B cell (primary cell): ENCODE measurements at regions of chr10 and their contacts with region 1.

Region 1: GRCh38 chr10:22010973-22011408 is 7.5 kb upstream of the DNAJC1 start:
- DNase-seq: peak; percentile 39
- ATAC-seq: no peak
- H3K4me3 ChIP-seq: no peak overlapping the region
- H3K4me3 Mint-ChIP-seq: no peak overlapping the region
- H3K27ac ChIP-seq: no peak overlapping the region
- H3K27ac Mint-ChIP-seq: no peak overlapping the region
- H3K4me1 ChIP-seq: peaks cover 0 to 3% of the 10 kb centered on the region in 2 donors
- H3K4me1 Mint-ChIP-seq: peaks cover 5% of the 10 kb centered on the region
- H3K27me3 ChIP-seq: no peaks in the 10 kb centered on the region
- H3K27me3 Mint-ChIP-seq: no peaks in the 10 kb centered on the region
- CTCF ChIP-seq: peak; percentile 83

Region 2: DNA sequence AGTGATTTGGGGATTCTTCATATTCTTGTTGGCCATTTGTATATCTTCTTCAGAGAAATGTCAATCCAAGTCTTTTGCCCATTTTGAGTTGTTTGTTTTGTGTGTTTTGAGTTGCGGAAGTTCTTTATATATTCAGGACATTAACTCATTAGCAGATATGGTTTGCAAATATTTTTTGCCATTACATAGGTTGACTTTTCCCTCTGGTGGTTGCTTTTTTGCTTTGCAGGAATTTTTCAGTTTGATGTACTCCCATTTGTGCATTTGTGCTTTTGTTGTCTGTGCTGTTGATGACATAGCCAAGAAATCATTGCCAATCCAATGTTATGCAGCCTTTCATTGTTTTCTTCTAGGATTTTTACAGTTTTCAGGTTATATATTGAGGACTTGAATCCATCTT is 56.1 kb after region 1 on chr10:
- CTCF ChIA-PET with region 1: no interaction called
- POLR2A ChIA-PET with region 1: no interaction called
- intact Hi-C with region 1: no loop called
- DNase-seq: no peak
- ATAC-seq: no peak
- H3K4me3 ChIP-seq: no peak overlapping the region
- H3K4me3 Mint-ChIP-seq: no peak overlapping the region
- H3K27ac ChIP-seq: no peak overlapping the region
- H3K27ac Mint-ChIP-seq: no peak overlapping the region
- H3K4me1 ChIP-seq: no peaks in the 10 kb centered on the region
- H3K4me1 Mint-ChIP-seq: no peaks in the 10 kb centered on the region
- H3K27me3 ChIP-seq: no peaks in the 10 kb centered on the region
- H3K27me3 Mint-ChIP-seq: peaks cover 5% of the 10 kb centered on the region
- CTCF ChIP-seq: no peak

Region 3: DNA sequence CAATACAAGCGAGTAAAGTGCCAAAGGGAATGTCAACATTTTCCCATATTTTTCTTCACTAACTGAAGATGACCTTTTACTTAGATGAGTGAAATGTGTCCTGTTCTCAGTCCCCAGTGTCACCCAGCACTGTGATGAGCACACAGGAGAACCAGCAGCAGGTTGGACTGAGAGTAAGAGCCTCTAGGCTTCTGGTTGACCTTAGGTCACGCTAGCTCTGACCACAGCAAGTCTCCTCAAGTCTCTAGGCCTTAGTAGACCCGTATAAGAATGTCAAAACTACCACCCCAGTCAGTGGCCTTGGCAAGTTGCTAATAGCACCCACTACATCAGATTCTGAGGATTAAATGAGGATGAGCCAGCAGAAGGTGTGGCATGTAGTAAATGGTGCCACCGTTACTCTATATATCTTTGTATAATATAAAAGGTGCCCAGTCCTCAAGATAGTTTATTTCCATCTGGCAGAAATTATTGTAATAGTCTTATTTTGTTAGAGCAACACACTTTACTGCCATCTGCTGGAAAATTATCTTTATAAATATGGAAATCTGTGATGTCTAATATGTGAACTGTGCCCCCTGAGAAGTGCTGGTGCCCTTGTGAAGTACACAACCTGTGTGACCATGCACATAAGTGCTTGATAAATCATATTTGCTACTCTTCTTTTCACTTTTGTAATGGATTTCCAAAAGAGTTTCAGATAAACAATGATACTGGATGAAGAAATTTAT is 410.0 kb after region 1 on chr10:
- CTCF ChIA-PET with region 1: no interaction called
- POLR2A ChIA-PET with region 1: no interaction called
- intact Hi-C with region 1: loop called (anchors 1 kb)
- DNase-seq: peak; percentile 37
- ATAC-seq: peak; percentile 54
- H3K4me3 ChIP-seq: no peak overlapping the region
- H3K4me3 Mint-ChIP-seq: no peak overlapping the region
- H3K27ac ChIP-seq: no peak overlapping the region
- H3K27ac Mint-ChIP-seq: no peak overlapping the region
- H3K4me1 ChIP-seq: peaks cover 4 to 5% of the 10 kb centered on the region in 2 donors
- H3K4me1 Mint-ChIP-seq: peaks cover 5% of the 10 kb centered on the region
- H3K27me3 ChIP-seq: peaks cover 0 to 2% (median 0%) of the 10 kb centered on the region in 4 experiments
- H3K27me3 Mint-ChIP-seq: no peaks in the 10 kb centered on the region
- CTCF ChIP-seq: peak; percentile 32

Region 4: DNA sequence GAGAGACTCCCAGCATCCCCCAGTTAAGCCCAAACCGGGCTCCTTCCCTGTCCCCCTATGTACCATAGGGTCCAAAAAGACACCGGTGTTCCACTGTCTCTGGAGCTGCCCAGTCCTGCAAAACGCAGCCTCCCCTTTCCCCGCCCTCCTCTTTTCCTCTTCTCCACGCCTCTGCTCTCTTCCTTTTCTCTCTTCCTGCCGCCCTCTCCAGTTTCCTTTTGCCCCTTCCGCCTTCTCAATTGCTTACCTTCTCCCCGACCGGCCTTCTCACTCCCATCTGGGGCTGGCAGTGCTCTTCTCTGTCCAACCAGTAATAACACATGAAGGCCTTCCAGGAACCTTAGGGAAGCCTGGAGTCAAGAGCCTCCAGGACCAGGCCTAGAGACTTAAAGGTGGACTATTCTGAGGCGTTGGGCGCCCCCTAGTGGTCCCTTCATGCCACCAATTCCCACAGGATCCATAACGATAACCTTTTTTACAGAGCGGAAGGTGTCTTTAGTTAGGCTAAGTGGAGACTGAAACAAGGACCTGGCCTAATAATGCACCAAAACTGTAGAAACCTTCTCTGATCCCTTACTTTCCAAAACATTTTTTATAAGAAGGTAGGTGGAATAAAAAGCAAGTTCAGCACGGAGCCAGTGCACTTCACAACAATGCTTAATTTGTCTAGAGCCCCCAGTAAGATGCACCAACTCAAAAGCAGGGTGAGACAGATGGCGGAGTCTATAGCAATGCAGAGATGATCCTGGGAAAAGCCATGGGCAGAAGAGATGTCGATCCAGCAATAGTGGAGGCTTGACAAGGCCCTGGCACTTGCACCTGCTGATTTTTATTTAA is 1057.2 kb after region 1 on chr10:
- CTCF ChIA-PET with region 1: no interaction called
- POLR2A ChIA-PET with region 1: no interaction called
- intact Hi-C with region 1: loop called (anchors 1 kb)
- DNase-seq: peak; percentile 70
- ATAC-seq: peak; percentile 33
- H3K4me3 ChIP-seq: no peak overlapping the region
- H3K4me3 Mint-ChIP-seq: no peak overlapping the region
- H3K27ac ChIP-seq: no peak overlapping the region
- H3K27ac Mint-ChIP-seq: no peak overlapping the region
- H3K4me1 ChIP-seq: no peaks in the 10 kb centered on the region
- H3K4me1 Mint-ChIP-seq: no peaks in the 10 kb centered on the region
- H3K27me3 ChIP-seq: peaks cover 0 to 4% (median 0%) of the 10 kb centered on the region in 4 experiments
- H3K27me3 Mint-ChIP-seq: peaks cover 20% of the 10 kb centered on the region
- CTCF ChIP-seq: peak; percentile 87